ENCODE measurements at regions of chr13 and their contacts with region 1.

Region 1: DNA sequence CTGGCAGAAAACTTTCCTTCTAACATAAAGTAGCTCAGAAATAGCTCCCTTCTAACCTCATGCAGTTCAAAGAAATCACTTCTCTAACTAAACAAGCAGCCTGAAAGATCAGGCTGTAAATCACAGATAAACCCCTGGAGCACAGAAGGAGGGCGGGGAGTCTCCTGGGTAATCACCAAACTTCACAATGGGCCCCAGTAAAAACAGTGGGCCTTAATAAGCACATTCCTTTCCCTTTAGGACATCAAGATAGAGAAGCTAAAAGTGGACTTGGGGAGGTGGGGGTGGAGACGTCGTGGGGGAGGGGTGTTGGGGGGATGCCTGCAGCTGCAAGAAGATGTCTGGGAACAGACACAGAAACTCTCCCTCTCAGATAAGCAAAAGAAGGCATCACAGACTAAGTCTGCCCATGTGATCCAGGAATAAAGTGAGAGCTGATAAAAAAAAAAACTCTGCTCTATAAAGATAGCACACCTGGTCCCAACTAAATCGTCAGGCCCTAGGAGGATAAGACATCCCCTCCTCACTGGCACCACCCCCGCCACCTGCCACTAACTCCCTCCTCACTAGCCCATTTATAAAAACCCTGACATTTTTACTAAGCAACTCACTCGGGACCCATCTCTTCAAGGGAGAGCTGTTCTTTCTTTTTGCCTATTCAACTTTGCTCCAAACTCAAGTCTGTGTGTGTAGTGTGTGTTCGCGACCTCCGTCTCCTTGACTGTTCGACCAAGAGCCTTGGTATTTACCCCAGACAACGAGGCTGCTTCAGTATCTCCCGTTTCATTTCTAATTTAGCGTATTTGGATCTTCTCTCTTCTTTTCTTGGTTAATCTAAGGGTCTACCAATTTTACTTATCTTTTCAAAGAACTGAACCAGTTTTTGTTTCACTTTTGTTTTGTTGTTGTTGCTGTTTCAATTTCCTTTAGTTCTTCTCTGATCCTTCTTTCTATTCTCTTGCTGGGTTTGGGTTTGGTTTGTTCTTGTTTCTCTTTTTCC is 31.7 kb downstream of the DNAJC15 start:
- DNase-seq: peak; percentile 87
- ATAC-seq: peak; percentile 82
- H3K4me3 ChIP-seq: peak overlapping the region; percentile 54
- H3K27ac ChIP-seq: peak overlapping the region; percentile 92
- H3K4me1 ChIP-seq: peaks cover 12% of the 10 kb centered on the region
- H3K27me3 ChIP-seq: no peaks in the 10 kb centered on the region
- CTCF ChIP-seq: no peak
- POLR2A ChIP-seq: no peak; the same call in 1 of the 2 replicates
- RAD21 ChIP-seq: no peak

Region 2: DNA sequence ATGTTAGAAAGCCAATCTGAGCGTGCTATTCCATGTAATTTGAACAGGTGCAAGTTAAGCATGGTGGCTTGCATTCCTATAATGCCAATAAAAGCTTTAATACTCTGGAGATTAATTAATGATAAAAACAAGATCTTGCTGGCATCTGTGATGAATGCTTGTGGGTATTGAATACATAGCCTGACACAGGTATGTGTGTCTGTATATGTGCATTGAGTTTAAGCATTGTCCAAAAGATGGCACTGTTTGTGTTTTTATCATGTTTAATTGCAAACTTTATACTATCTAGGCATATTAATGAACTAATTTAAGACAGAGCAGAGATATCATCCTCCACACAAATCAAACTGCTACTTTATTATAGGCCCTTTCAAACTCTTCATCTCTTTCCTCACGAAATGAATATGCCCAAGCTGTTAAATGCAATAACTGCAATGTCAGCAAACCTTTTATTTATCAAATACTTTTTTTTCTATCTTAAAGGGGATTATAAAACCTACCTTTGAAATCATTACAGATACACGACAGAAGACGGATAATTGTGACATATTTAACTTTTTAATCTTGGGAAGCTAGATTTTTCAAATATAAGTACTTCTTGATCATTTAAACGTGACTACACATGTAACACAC is 394.7 kb before region 1 on chr13:
- CTCF ChIA-PET with region 1: no interaction called
- POLR2A ChIA-PET with region 1: no interaction called
- dilution Hi-C with region 1: no loop called
- in situ Hi-C with region 1: no loop called
- intact Hi-C with region 1: loop called (anchors 10 kb)
- DNase-seq: peak; percentile 27
- ATAC-seq: peak; percentile 65
- H3K4me3 ChIP-seq: no peak overlapping the region
- H3K27ac ChIP-seq: no peak overlapping the region
- H3K4me1 ChIP-seq: no peaks in the 10 kb centered on the region
- H3K27me3 ChIP-seq: peaks cover 31% of the 10 kb centered on the region
- CTCF ChIP-seq: peak; percentile 53
- POLR2A ChIP-seq: no peak
- RAD21 ChIP-seq: peak; percentile 60

Region 3: DNA sequence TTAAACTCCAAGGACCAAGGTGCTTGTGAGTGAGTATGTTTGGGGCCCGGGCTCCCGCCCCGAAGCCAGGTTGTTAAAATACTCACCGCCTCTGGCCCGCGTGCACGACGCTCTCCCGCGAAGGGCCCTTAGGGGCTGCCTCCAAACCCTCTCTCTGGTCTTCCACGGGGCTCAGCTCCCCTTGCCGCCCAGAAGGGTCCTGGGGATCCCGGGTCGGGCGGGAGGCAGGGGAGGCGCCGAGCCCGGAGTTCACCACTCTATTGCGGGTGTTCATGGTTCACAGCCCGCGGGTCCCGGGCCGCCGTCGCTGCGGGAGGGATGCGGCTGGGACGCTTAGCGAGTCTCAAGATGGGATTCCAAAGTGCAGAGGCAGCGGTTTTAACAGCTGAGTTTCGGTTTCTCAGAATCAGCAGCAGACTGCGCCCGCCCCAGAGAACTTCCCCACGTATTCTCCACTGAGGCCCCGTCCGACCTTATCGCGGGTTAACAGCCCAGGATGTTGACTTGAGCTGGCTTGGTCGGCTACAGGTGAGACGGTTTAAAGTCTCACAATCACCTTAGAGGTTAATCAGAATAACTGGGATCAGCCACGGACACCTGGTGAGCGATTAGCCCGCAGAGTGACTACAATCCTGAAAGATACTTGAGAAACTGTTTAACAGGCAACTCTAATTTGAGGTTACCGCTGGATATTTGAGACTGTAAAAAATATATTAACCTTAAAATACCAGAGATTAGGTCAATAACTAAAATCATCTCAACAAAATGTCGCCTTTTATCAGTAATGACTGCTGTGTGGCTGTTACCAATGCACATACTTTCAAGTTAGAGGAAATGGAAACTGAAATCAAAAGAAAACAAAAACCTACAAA is 63.0 kb before region 1 on chr13 and contains the start of gene EPSTI1:
- CTCF ChIA-PET with region 1: no interaction called
- POLR2A ChIA-PET with region 1: no interaction called
- dilution Hi-C with region 1: no loop called
- in situ Hi-C with region 1: no loop called
- intact Hi-C with region 1: loop called (anchors 1 kb)
- DNase-seq: peak; percentile 74
- ATAC-seq: peak; percentile 84
- H3K4me3 ChIP-seq: peak within 1 kb of the TSS; percentile 43
- H3K27ac ChIP-seq: peak within 1 kb of the TSS; percentile 43
- H3K4me1 ChIP-seq: peaks cover 2% of the 10 kb centered on the region
- H3K27me3 ChIP-seq: no peaks in the 10 kb centered on the region
- CTCF ChIP-seq: no peak
- POLR2A ChIP-seq: no peak
- RAD21 ChIP-seq: no peak
- total RNA-seq, gene EPSTI1: 0.90 and 1.1 TPM in 2 replicates

Region 4: DNA sequence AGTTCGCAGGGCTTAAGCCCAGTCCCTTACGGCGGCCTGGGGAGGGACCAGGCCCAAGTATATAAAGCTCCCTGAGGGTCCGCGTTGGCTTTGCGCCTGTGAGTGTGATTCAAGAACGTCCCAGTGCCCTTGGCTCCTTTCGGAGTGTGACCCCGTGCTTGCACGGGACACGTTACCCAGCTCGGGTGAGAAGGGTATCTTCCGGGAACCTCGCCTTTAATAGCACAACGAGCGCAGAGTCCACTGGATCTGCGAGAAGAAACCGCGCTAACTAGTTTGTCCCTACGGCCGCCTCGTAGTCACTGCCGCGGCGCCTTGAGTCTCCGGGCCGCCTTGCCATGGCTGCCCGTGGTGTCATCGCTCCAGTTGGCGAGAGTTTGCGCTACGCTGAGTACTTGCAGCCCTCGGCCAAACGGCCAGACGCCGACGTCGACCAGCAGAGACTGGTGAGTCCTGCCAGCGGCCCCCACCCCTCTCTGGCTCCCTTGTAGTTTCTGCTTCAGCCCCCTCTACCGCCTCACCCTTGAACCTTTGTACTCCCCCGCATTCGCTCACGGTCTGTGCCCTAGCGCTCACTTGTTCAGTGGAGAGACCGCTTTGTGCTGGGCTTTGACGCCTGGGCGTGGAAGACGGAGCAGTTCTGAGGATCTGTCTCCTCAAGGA is 31.7 kb before region 1 on chr13 and contains the start of gene DNAJC15:
- CTCF ChIA-PET with region 1: no interaction called
- POLR2A ChIA-PET with region 1: no interaction called
- dilution Hi-C with region 1: no loop called
- in situ Hi-C with region 1: no loop called
- intact Hi-C with region 1: loop called (anchors 1 kb)
- DNase-seq: peak; percentile 83
- ATAC-seq: peak; percentile 88
- H3K4me3 ChIP-seq: peak within 1 kb of the TSS; percentile 59
- H3K27ac ChIP-seq: peak within 1 kb of the TSS; percentile 95
- H3K4me1 ChIP-seq: peaks cover 3% of the 10 kb centered on the region
- H3K27me3 ChIP-seq: no peaks in the 10 kb centered on the region
- CTCF ChIP-seq: 0 out of 2 replicates have a peak, but pooled peaks have one; percentile 0
- POLR2A ChIP-seq: peak; percentile 44
- RAD21 ChIP-seq: no peak
- total RNA-seq, gene DNAJC15: 7.0 and 12.5 TPM in 2 replicates

Region 5: GRCh38 chr13:43041369-43041921 is 13.7 kb before region 1 on chr13:
- CTCF ChIA-PET with region 1: no interaction called
- POLR2A ChIA-PET with region 1: interaction called, 12 read pairs
- dilution Hi-C with region 1: no loop called
- in situ Hi-C with region 1: no loop called
- intact Hi-C with region 1: no loop called
- DNase-seq: peak; percentile 24
- ATAC-seq: peak; percentile 71
- H3K4me3 ChIP-seq: no peak overlapping the region
- H3K27ac ChIP-seq: no peak overlapping the region
- H3K4me1 ChIP-seq: peaks cover 4% of the 10 kb centered on the region; the same call in 1 of the 2 replicates
- H3K27me3 ChIP-seq: no peaks in the 10 kb centered on the region
- CTCF ChIP-seq: no peak
- POLR2A ChIP-seq: no peak
- RAD21 ChIP-seq: no peak

Measured in IMR-90 (cell line).